ENCODE measurements at regions of chr19 and their contacts with region 1.

Region 1: GRCh38 chr19:18919086-18919899 is at the starts of genes COPE and DDX49:
- DNase-seq: peak; percentile 100
- H3K4me3 Mint-ChIP-seq: peak within 1 kb of the TSS; percentile 89
- H3K27ac Mint-ChIP-seq: peak within 1 kb of the TSS; percentile 91
- H3K4me1 Mint-ChIP-seq: peaks cover 14% of the 10 kb centered on the region
- H3K27me3 Mint-ChIP-seq: no peaks in the 10 kb centered on the region
- CTCF ChIP-seq: no peak
- total RNA-seq, gene COPE: 310 and 456 TPM in 2 replicates
- total RNA-seq, gene DDX49: 87.7 and 98.8 TPM in 2 replicates

Region 2: DNA sequence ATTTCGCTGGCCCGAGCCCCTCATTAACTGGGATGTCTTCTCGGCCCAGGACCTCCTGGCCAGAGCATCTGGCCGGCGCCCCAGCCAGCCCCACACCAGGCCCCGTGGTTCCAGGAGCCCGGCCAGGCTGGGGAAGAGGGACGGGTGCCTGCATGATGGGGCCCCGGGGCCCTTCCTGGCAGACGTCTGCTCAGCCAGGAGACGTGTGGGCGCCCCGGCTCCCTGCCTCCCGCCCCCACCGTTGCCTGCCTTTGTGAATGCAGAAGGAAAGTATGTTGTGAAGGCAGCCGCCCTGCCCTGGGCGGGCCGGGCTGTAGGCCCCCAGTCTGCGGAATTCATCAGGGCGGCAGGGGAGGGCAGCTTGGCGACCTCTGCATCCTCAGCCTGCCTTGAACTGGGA is 123.8 kb before region 1 on chr19:
- CTCF ChIA-PET with region 1: no interaction called
- POLR2A ChIA-PET with region 1: no interaction called
- intact Hi-C with region 1: no loop called
- DNase-seq: no peak
- H3K4me3 Mint-ChIP-seq: no peak overlapping the region
- H3K27ac Mint-ChIP-seq: no peak overlapping the region
- H3K4me1 Mint-ChIP-seq: peaks cover under 1% of the 10 kb centered on the region
- H3K27me3 Mint-ChIP-seq: peaks cover 38% of the 10 kb centered on the region
- CTCF ChIP-seq: no peak

Region 3: GRCh38 chr19:18831524-18832305 is 87.6 kb before region 1 on chr19 and contains the start of gene UPF1:
- CTCF ChIA-PET with region 1: no interaction called
- POLR2A ChIA-PET with region 1: interaction called, 15 read pairs
- intact Hi-C with region 1: no loop called
- DNase-seq: peak; percentile 90
- H3K4me3 Mint-ChIP-seq: peak within 1 kb of the TSS; percentile 94
- H3K27ac Mint-ChIP-seq: peak within 1 kb of the TSS; percentile 98
- H3K4me1 Mint-ChIP-seq: peaks cover 25% of the 10 kb centered on the region
- H3K27me3 Mint-ChIP-seq: no peaks in the 10 kb centered on the region
- CTCF ChIP-seq: no peak
- total RNA-seq, gene UPF1: 79.8 and 85.0 TPM in 2 replicates

Region 4: GRCh38 chr19:18906605-18907519 is 12.4 kb before region 1 on chr19:
- CTCF ChIA-PET with region 1: no interaction called
- POLR2A ChIA-PET with region 1: interaction called, 12 read pairs
- intact Hi-C with region 1: no loop called
- DNase-seq: no peak
- H3K4me3 Mint-ChIP-seq: no peak overlapping the region
- H3K27ac Mint-ChIP-seq: no peak overlapping the region
- H3K4me1 Mint-ChIP-seq: no peaks in the 10 kb centered on the region
- H3K27me3 Mint-ChIP-seq: no peaks in the 10 kb centered on the region
- CTCF ChIP-seq: no peak

Region 5: DNA sequence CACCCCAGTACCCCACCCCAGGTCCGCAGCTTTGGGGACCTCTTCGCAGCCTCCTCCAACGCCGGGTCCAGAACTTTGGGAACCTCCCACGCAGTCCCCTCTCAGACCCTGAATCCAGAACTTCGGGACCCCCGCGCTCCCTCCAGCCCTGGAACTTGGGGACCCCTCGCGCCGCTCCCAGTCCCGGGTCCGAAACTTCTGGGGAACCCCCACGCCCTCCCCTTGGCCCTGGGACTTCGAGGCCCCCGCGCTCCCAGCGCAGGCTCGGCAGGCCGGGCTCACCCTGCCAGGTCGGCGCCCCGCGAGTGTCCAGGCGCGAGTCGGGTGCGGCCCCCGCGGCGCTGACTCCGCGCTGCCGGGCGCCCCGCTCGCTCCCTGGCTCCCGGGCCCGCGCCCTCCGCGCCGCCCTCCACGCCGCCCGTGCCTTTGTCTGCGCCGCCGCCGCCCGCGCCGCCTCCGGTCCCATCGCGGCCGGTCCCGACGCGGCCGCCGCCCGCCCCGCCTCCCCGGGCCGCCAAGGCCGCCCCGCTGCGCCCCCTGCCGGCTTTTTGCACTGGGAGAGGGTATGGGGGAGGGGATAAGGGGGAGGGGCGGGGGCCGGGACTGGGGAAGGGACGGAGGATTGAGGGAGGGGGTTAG is 21.6 kb after region 1 on chr19 and contains the start of gene HOMER3:
- CTCF ChIA-PET with region 1: interaction called, 4 read pairs
- POLR2A ChIA-PET with region 1: interaction called, 37 read pairs
- intact Hi-C with region 1: no loop called
- DNase-seq: peak; percentile 74
- H3K4me3 Mint-ChIP-seq: peak within 1 kb of the TSS; percentile 94
- H3K27ac Mint-ChIP-seq: peak within 1 kb of the TSS; percentile 93
- H3K4me1 Mint-ChIP-seq: peaks cover 17% of the 10 kb centered on the region
- H3K27me3 Mint-ChIP-seq: no peaks in the 10 kb centered on the region
- CTCF ChIP-seq: peak; percentile 20
- total RNA-seq, gene HOMER3: 57.9 and 58.9 TPM in 2 replicates

Region 6: GRCh38 chr19:18967358-18968146 is 48.3 kb after region 1 on chr19:
- CTCF ChIA-PET with region 1: no interaction called
- POLR2A ChIA-PET with region 1: interaction called, 13 read pairs
- intact Hi-C with region 1: no loop called
- DNase-seq: peak; percentile 91
- H3K4me3 Mint-ChIP-seq: no peak overlapping the region
- H3K27ac Mint-ChIP-seq: peak overlapping the region; percentile 27
- H3K4me1 Mint-ChIP-seq: no peaks in the 10 kb centered on the region
- H3K27me3 Mint-ChIP-seq: no peaks in the 10 kb centered on the region
- CTCF ChIP-seq: no peak